ENCODE measurements at regions of chr15 and their contacts with region 1.

Region 1: GRCh38 chr15:88904624-88905327 is 8.4 kb downstream of the MFGE8 start:
- DNase-seq: peak; percentile 97
- ATAC-seq: peak; percentile 99
- H3K4me3 Mint-ChIP-seq: peak overlapping the region; percentile 2
- H3K27ac Mint-ChIP-seq: peak overlapping the region; percentile 84
- H3K4me1 Mint-ChIP-seq: peaks cover 29% of the 10 kb centered on the region
- H3K27me3 Mint-ChIP-seq: no peaks in the 10 kb centered on the region

Region 2: GRCh38 chr15:88782506-88782905 is 122.3 kb before region 1 on chr15:
- CTCF ChIA-PET with region 1: no interaction called
- POLR2A ChIA-PET with region 1: no interaction called
- DNase-seq: no peak
- ATAC-seq: no peak
- H3K4me3 Mint-ChIP-seq: no peak overlapping the region
- H3K27ac Mint-ChIP-seq: no peak overlapping the region
- H3K4me1 Mint-ChIP-seq: no peaks in the 10 kb centered on the region
- H3K27me3 Mint-ChIP-seq: peaks cover 20% of the 10 kb centered on the region

Region 3: DNA sequence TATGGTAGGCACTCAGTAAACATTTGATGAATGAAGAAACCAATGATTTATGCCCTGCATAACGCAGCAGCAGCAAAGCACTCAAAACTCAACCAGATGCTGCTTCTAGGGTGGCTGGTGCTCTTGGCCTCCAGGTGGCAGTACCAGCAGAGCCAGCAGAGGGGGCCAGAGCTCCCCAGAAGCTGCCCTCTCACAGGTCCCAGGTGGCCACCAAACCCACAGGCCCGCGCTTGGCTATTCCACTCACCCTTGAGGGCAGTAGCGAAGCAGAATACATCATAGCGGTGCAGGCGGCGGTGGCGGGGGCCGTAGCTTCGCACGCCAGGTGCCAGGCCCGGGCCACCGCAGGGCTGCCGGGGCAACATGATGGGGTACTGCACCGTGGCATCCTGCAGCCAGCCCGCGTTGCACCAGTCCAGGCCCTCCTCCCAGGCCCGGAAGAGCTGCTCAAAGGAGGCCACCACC is 26.0 kb before region 1 on chr15:
- CTCF ChIA-PET with region 1: interaction called, 17 read pairs
- POLR2A ChIA-PET with region 1: no interaction called
- DNase-seq: peak; percentile 58
- ATAC-seq: peak; percentile 79
- H3K4me3 Mint-ChIP-seq: no peak overlapping the region
- H3K27ac Mint-ChIP-seq: no peak overlapping the region
- H3K4me1 Mint-ChIP-seq: no peaks in the 10 kb centered on the region
- H3K27me3 Mint-ChIP-seq: no peaks in the 10 kb centered on the region

Region 4: GRCh38 chr15:88920186-88920891 is 15.6 kb after region 1 on chr15:
- CTCF ChIA-PET with region 1: interaction called, 33 read pairs
- POLR2A ChIA-PET with region 1: no interaction called
- DNase-seq: no peak
- ATAC-seq: no peak
- H3K4me3 Mint-ChIP-seq: no peak overlapping the region
- H3K27ac Mint-ChIP-seq: no peak overlapping the region
- H3K4me1 Mint-ChIP-seq: peaks cover 9% of the 10 kb centered on the region
- H3K27me3 Mint-ChIP-seq: peaks cover 9% of the 10 kb centered on the region

Region 5: GRCh38 chr15:89017370-89018066 is 112.7 kb after region 1 on chr15:
- CTCF ChIA-PET with region 1: interaction called, 36 read pairs
- POLR2A ChIA-PET with region 1: interaction called, 3 read pairs
- DNase-seq: peak; percentile 87
- ATAC-seq: peak; percentile 87
- H3K4me3 Mint-ChIP-seq: peak overlapping the region; percentile 74
- H3K27ac Mint-ChIP-seq: peak overlapping the region; percentile 80
- H3K4me1 Mint-ChIP-seq: peaks cover 31% of the 10 kb centered on the region
- H3K27me3 Mint-ChIP-seq: peaks cover 47% of the 10 kb centered on the region

Region 6: GRCh38 chr15:89129123-89129815 is 224.5 kb after region 1 on chr15:
- CTCF ChIA-PET with region 1: interaction called, 11 read pairs
- POLR2A ChIA-PET with region 1: no interaction called
- DNase-seq: peak; percentile 64
- ATAC-seq: no peak
- H3K4me3 Mint-ChIP-seq: no peak overlapping the region
- H3K27ac Mint-ChIP-seq: no peak overlapping the region
- H3K4me1 Mint-ChIP-seq: peaks cover 15% of the 10 kb centered on the region
- H3K27me3 Mint-ChIP-seq: no peaks in the 10 kb centered on the region

Region 7: DNA sequence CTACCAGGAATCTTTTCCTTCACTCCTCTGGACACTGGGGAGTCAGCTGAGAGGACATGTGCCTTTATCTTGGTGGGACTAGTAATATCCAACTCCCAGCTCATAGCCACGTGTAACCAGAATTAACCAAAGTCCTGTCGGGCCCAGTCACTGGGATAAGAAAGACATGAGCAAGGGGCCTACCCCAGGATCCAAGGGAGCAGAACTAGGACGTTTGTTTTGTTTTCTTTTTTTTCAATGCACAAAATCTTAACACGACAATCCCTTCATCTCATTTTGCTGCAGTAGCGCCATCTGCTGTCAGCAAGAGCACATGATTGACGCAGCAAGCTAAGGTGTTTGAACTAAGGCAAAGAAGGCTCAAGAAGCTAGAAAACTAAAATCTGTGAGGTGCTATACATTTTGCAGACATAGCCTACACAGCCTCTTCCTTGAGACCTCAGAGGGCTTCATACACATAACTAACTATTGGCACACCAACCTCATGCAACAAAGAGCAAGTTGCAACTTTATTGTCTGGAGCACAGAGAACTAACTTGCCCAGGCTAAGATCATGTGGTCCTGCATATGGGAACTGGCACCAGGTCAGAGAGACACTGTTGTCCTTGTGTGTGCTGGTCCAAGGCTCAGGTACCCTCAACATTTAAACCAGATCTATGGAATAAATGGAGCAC is 273.0 kb after region 1 on chr15:
- CTCF ChIA-PET with region 1: interaction called, 25 read pairs
- POLR2A ChIA-PET with region 1: no interaction called
- DNase-seq: peak; percentile 83
- ATAC-seq: peak; percentile 49
- H3K4me3 Mint-ChIP-seq: no peak overlapping the region
- H3K27ac Mint-ChIP-seq: no peak overlapping the region
- H3K4me1 Mint-ChIP-seq: peaks cover 6% of the 10 kb centered on the region
- H3K27me3 Mint-ChIP-seq: no peaks in the 10 kb centered on the region

Measured in activated CD8-positive, alpha-beta T cell treated with anti-CD3 and anti-CD28 coated beads, Interleukin-2, amount 10 ng/mL, durations not matched to agents 7 days and 5 days (primary cell).